ENCODE measurements at regions of chr1 and their contacts with region 1.

Region 1: GRCh38 chr1:184386312-184387068 is at the start of gene C1orf21:
- DNase-seq: peak; percentile 75
- H3K4me3 Mint-ChIP-seq: peak within 1 kb of the TSS; percentile 86
- H3K27ac Mint-ChIP-seq: peak within 1 kb of the TSS; percentile 53
- H3K4me1 Mint-ChIP-seq: peaks cover 12% of the 10 kb centered on the region
- H3K27me3 Mint-ChIP-seq: peaks cover 71% of the 10 kb centered on the region
- total RNA-seq, gene C1orf21: 1.8 and 4.1 TPM in 2 replicates

Region 2: GRCh38 chr1:183416850-183417771 is 969.4 kb before region 1 on chr1:
- intact Hi-C with region 1: loop called (anchors 5 kb)
- DNase-seq: peak; percentile 17
- H3K4me3 Mint-ChIP-seq: peak overlapping the region; percentile 16
- H3K27ac Mint-ChIP-seq: no peak overlapping the region
- H3K4me1 Mint-ChIP-seq: peaks cover 25% of the 10 kb centered on the region
- H3K27me3 Mint-ChIP-seq: peaks cover 46% of the 10 kb centered on the region

Region 3: DNA sequence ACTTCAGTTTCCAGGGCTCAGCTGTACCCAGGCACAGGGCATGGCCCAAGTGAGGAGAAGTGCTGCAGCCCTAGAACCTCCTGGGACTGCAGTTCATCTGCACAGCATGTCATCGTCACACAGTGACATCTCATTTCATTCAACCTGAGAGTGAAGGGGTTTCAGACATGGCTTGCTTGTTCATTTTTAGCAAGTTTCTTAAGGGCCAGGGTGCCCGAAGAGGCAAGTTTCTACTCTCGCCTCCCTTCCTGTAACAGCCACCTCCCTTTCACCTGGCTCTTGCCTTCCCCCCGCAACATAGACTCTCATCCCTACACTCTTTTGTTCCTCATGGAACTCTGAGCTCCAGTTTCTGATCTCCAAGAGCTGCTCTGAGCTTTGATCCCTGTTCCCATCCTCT is 108.4 kb after region 1 on chr1:
- intact Hi-C with region 1: loop called (anchors 1 kb)
- DNase-seq: no peak
- H3K4me3 Mint-ChIP-seq: no peak overlapping the region
- H3K27ac Mint-ChIP-seq: no peak overlapping the region
- H3K4me1 Mint-ChIP-seq: peaks cover 20% of the 10 kb centered on the region
- H3K27me3 Mint-ChIP-seq: peaks cover 2% of the 10 kb centered on the region

Region 4: DNA sequence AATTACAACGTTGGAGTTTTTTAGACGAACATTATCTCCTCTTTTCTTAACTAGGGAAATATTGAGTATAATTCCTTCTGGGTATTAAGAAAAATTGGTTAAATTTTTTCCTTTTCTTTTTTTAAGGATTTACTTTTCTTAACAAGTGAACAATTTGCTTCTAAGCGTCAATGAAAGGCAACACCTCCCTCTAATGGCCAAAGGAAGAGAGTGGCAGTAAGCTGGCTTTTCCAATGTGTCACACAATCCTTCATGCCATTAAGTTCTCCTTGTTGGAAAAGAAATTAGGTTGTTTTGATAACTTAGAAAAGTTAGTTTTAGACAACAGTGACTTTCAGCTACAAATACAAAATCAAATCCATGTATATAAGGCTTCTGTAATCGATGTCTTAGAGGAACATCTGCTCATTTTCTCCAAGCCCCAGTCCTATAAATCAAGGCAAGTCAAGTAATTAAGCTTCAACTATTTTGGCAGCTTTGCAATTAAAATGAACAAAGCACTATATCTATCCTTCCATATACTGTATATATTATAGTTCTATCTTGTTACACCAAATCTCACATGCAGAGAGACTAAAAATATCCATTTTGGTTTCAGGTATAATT is 305.3 kb after region 1 on chr1:
- intact Hi-C with region 1: loop called (anchors 10 kb)
- DNase-seq: no peak
- H3K4me3 Mint-ChIP-seq: no peak overlapping the region
- H3K27ac Mint-ChIP-seq: no peak overlapping the region
- H3K4me1 Mint-ChIP-seq: peaks cover 9% of the 10 kb centered on the region
- H3K27me3 Mint-ChIP-seq: no peaks in the 10 kb centered on the region